Colonic mucosa (tissue), 4 donors: ENCODE measurements at regions of chr9 and their contacts with region 1.

Region 1: GRCh38 chr9:136339173-136339957 is 12.0 kb downstream of the GPSM1 start:
- DNase-seq: peak; percentile 74
- H3K4me3 ChIP-seq: no peak overlapping the region
- H3K27ac ChIP-seq: no peak overlapping the region
- H3K4me1 ChIP-seq: no peaks in the 10 kb centered on the region
- H3K27me3 ChIP-seq: no peaks in the 10 kb centered on the region
- CTCF ChIP-seq: peak; percentile 89

Region 2: GRCh38 chr9:136160381-136160841 is 179.0 kb before region 1 on chr9:
- intact Hi-C with region 1: no loop called
- DNase-seq: no peak
- H3K4me3 ChIP-seq: no peak overlapping the region
- H3K27ac ChIP-seq: no peak overlapping the region
- H3K4me1 ChIP-seq: no peaks in the 10 kb centered on the region
- H3K27me3 ChIP-seq: peaks cover 6% of the 10 kb centered on the region
- CTCF ChIP-seq: no peak

Region 3: GRCh38 chr9:136171081-136172029 is 168.0 kb before region 1 on chr9:
- intact Hi-C with region 1: no loop called
- DNase-seq: no peak
- H3K4me3 ChIP-seq: no peak overlapping the region
- H3K27ac ChIP-seq: no peak overlapping the region
- H3K4me1 ChIP-seq: no peaks in the 10 kb centered on the region
- H3K27me3 ChIP-seq: no peaks in the 10 kb centered on the region
- CTCF ChIP-seq: no peak

Region 4: GRCh38 chr9:136245219-136246150 is 93.9 kb before region 1 on chr9 and contains the start of gene QSOX2:
- intact Hi-C with region 1: no loop called
- DNase-seq: peak; percentile 82
- H3K4me3 ChIP-seq: peak within 1 kb of the TSS; percentile 81
- H3K27ac ChIP-seq: no peak within 1 kb of the TSS
- H3K4me1 ChIP-seq: no peaks in the 10 kb centered on the region
- H3K27me3 ChIP-seq: peaks cover 3% of the 10 kb centered on the region
- CTCF ChIP-seq: no peak
- total RNA-seq, gene QSOX2: 4.9 to 12.0 TPM

Region 5: DNA sequence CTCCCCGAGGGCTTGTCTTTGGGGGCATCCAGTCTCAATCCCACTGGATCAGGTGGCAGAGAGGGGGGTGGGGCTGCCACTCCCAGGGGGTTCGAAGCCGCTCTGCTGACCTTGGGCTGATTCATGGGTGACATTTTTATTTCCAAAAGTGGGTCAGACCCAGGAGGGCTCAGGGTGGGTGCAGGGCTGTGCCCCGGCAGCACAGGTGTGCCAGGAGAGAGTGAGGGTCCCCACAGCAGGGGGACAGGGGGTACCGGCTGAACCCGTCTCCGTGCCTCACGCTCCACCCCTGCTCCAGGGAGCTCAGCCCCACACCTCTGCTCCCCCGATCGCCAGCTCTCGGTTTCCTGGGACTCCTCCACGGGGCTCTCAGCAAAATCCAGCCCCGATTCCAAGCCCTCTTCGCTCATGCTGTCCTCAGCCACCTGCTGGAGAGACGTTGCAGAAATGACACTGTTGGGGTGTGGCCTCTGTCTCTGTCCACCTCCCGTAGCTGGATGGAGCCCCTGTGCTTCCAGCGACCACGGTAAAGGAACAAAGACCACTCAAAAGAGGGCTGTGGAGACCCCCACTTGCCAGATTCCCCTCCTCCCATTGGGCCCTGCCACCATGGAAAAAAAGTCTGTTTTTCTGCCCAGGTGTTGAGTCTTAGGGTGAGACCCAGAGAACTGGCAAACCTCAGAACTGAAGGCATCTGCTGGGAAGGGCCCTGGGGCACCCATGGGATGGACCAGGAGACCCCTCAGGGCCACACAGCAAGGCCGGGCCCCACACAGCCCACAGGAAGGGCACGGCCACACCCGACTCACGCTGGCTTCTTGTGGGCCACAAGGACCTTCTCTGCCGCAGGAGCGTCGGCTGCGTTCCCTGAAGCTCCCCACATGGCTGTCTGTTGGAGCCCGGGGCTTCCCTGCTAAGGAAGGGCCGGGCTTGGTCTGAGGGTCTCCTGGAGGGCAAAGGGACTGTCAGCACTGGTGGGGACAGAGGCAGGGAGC is 83.2 kb before region 1 on chr9:
- intact Hi-C with region 1: no loop called
- DNase-seq: no peak
- H3K4me3 ChIP-seq: no peak overlapping the region
- H3K27ac ChIP-seq: no peak overlapping the region
- H3K4me1 ChIP-seq: no peaks in the 10 kb centered on the region
- H3K27me3 ChIP-seq: no peaks in the 10 kb centered on the region
- CTCF ChIP-seq: no peak

Region 6: GRCh38 chr9:136400038-136400834 is 60.9 kb after region 1 on chr9 and contains the start of gene SNAPC4:
- intact Hi-C with region 1: loop called (anchors 10 kb)
- DNase-seq: peak; percentile 87
- H3K4me3 ChIP-seq: peak within 1 kb of the TSS; percentile 97
- H3K27ac ChIP-seq: no peak within 1 kb of the TSS
- H3K4me1 ChIP-seq: peaks cover 16% of the 10 kb centered on the region
- H3K27me3 ChIP-seq: no peaks in the 10 kb centered on the region
- CTCF ChIP-seq: peak; percentile 97
- total RNA-seq, gene SNAPC4: 6.0 to 9.7 TPM